Left ventricle myocardium inferior (tissue), 1 donor: ENCODE measurements at regions of chr14 and their contacts with region 1.

Region 1: DNA sequence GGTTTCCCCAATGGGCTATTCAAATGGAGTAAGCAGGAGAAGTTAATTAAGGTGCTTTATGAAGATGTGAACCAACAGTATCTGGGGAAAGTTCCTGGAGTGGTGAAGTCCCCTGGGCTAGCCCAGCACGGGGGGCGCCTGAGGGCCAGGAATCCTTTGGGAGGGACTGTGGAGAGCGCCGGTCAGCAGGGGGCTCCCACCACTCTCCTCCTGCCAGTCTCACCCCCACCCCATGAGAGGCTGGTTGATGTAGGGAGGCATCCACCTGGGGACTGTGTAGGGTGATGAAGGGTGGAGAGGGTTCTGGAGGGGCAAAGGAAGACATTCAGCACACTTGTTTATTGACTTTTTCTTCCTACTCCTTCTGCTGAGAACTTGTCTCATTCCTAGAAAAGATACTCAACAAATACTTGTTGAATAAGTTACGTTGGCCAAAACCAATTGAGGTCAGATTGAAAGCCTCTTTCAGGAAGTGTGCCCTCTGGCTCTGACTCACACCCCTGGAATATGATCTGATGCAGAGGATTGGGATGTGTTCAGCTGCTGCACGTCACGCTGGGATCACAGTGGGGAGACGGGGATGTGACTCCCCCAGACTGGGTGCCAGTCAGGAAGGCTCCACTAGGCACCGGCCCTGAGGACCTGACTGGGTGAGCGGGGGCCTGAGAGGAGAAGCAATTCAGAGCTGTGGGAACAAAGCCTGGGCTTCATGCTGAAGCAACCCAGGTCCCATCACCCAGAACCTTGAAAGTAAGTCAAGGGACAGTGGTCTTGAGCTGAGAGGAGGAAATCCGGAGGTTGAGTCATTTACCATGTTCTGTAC is 4.2 kb downstream of the CEBPE start:
- DNase-seq: no peak
- H3K4me3 ChIP-seq: no peak overlapping the region
- H3K27ac ChIP-seq: no peak overlapping the region
- H3K4me1 ChIP-seq: peaks cover 7% of the 10 kb centered on the region
- H3K27me3 ChIP-seq: peaks cover 71% of the 10 kb centered on the region
- CTCF ChIP-seq: no peak

Region 2: DNA sequence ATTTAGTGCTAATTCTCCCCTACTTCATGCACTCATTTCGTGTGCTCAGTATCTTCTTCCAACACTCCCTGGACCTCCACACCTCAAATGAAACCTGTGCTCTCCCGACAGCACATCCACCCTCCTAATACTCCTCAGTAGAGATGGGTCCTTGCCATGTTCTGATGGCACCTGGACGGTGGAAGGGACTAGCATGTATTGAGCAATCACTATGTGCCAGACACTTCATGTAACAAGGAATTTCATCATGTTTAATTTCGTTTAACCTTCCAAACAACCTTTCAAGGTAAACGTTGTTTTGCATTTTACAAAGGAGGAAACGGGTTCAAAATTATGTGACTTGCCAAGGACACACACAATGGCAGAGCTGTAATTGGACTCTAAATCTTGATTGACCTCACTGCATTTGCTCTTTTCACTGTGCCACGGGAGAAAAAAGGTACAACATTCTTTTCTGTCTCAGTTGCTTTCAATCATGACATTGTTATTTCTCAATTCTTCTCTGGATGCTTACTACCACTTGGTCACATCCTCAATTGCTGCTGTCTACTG is 80.7 kb after region 1 on chr14:
- intact Hi-C with region 1: loop called (anchors 5 kb)
- DNase-seq: no peak
- H3K4me3 ChIP-seq: no peak overlapping the region
- H3K27ac ChIP-seq: no peak overlapping the region
- H3K4me1 ChIP-seq: no peaks in the 10 kb centered on the region
- H3K27me3 ChIP-seq: no peaks in the 10 kb centered on the region
- CTCF ChIP-seq: no peak